ENCODE measurements at regions of chr14 and their contacts with region 1.

Region 1: DNA sequence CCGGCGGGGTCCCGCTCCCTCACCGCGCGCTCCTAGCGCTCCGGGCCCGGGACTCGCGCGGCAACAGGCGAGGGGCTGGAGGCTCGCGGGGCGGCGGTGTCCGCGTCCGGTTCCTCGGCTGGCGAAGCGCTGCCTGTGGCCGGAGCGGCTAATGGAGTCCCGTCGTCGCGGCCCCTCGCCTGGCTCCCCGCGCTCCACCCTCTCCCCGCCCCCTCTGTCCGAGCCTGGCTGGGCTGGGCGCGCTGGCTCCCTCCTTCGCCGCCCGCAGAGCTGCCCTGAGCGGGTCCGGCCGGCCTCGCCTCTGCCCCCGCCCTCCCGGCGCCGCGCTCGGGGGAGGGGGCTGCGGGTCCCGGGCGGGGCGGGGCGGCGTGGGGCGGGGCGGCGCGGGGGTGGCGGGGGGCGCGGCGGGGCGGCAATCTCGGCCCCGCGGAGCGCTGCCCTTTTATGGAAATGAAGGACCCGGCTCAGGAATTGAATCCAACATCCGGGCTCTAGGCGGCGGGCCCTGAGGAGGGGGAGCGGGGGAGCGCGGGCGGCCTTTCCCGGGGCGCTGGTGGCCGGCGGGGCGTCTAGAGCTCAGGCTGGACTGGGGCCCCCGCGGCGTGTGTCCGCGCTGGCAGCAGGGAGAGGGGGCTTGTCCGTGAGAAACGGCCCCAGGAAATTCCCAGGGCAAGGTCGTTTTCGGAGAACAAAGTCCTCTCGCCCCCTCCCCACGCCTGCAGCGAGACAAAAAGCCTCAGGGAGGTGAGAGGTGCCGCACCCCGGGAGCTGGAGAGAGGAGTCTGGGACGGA is at the start of gene FERMT2:
- DNase-seq: no peak
- H3K4me3 ChIP-seq: peak within 1 kb of the TSS; percentile 85
- H3K27me3 ChIP-seq: no peaks in the 10 kb centered on the region
- CTCF ChIP-seq: no peak
- polyA plus RNA-seq, gene FERMT2: 275 and 393 TPM in 2 replicates

Region 2: GRCh38 chr14:53027041-53027440 is 75.9 kb after region 1 on chr14:
- CTCF ChIA-PET with region 1: interaction called, 4 read pairs
- POLR2A ChIA-PET with region 1: interaction called, 15 read pairs
- DNase-seq: no peak
- H3K4me3 ChIP-seq: no peak overlapping the region
- H3K27me3 ChIP-seq: no peaks in the 10 kb centered on the region
- CTCF ChIP-seq: no peak